GM23248 (cell line): ENCODE measurements at regions of chr20 and their contacts with region 1.

Region 1: DNA sequence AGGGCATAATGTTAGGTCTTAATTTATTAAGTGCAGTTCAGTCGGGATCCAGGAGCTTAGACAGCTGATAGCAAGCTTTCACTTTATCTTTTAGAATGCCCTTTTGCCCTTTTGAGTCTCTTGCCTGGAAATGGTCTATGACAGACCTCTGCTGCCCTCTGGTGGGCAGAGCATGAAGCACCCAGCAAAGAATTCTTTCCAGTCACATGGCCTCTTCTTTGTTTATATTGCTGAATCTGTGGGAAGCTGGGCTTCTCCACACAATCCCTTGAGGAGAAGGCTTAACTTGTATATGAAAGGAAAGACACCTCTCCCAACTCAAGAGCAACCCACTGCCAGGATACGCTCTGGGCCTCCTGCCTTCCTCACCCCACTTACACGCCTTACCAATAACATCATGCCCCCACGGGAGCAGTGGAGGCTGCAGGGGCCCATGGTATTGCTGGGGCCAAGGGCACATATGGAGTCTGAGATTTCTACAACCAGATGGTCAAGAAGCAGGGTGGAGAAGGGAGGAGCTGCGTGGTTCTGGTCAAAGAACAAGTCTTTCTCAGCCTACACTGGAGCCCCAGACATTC is 20.4 kb downstream of the WFDC3 start:
- DNase-seq: peak; percentile 74
- H3K4me3 ChIP-seq: no peak overlapping the region
- H3K27ac ChIP-seq: no peak overlapping the region
- H3K4me1 ChIP-seq: peaks cover 6% of the 10 kb centered on the region
- H3K27me3 ChIP-seq: no peaks in the 10 kb centered on the region

Region 2: GRCh38 chr20:45300961-45301360 is 470.3 kb before region 1 on chr20:
- in situ Hi-C with region 1: loop called (anchors 10 kb)
- DNase-seq: peak; percentile 53
- H3K4me3 ChIP-seq: no peak overlapping the region
- H3K27ac ChIP-seq: no peak overlapping the region
- H3K4me1 ChIP-seq: no peaks in the 10 kb centered on the region
- H3K27me3 ChIP-seq: no peaks in the 10 kb centered on the region

Region 3: GRCh38 chr20:45450097-45450818 is 321.0 kb before region 1 on chr20:
- in situ Hi-C with region 1: loop called (anchors 25 kb)
- DNase-seq: peak; percentile 80
- H3K4me3 ChIP-seq: no peak overlapping the region
- H3K27ac ChIP-seq: no peak overlapping the region
- H3K4me1 ChIP-seq: no peaks in the 10 kb centered on the region
- H3K27me3 ChIP-seq: peaks cover 12% of the 10 kb centered on the region; the same call in 1 of the 2 replicates

Region 4: DNA sequence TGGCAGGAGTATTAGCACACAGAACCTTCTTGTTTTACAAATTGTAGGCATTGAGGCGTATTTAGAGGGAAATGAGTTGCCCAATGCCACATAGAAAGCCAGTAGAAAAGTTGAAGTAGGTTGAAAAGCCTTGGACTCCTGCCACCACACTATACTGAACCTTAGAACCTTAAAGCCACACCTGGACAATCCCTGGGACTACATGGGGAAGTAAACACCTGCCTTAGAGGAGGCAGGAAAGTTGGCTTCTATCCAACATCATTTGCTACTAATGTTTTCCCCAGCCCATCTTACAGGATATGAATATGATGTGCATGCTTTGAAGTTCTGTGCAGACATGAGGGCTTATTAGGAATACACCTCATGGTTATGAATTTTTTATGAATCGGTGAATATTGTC is 218.8 kb before region 1 on chr20:
- in situ Hi-C with region 1: loop called (anchors 25 kb)
- DNase-seq: no peak
- H3K4me3 ChIP-seq: no peak overlapping the region
- H3K27ac ChIP-seq: no peak overlapping the region
- H3K4me1 ChIP-seq: no peaks in the 10 kb centered on the region
- H3K27me3 ChIP-seq: peaks cover 7% of the 10 kb centered on the region; the same call in 1 of the 2 replicates